Right ventricle myocardium inferior (tissue), 1 donor: ENCODE measurements at regions of chr1 and their contacts with region 1.

Region 1: DNA sequence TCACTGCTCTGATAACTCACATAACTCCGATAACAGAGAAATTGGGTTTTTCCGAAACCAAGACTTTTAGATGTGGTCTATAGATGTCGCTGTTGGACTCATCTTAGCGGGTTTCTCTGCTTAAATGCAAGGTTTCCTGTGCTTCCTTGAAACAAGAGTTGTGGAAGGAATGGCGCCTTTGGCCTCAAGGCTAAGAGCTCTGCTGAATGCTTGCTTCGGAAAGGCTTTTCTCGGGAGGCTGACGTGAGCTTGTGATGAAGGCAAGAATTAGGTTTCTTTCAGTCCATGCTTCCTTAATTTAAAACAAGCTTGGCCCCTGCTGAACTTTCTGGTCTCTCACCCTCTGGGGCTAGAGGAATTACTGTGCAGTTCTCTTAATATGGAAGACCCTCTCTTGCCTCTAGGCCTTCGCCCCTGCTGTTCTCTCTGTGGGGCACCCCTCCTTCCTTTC is 113.5 kb downstream of the MAP3K21 start:
- DNase-seq: no peak
- ATAC-seq: no peak

Region 2: GRCh38 chr1:233790662-233791375 is 349.8 kb after region 1 on chr1:
- intact Hi-C with region 1: loop called (anchors 1 kb)
- DNase-seq: no peak
- ATAC-seq: peak; percentile 79

Region 3: GRCh38 chr1:233904633-233905415 is 463.8 kb after region 1 on chr1 and contains the start of gene SLC35F3:
- intact Hi-C with region 1: loop called (anchors 5 kb)
- DNase-seq: peak; percentile 67
- ATAC-seq: peak; percentile 52
- total RNA-seq, gene SLC35F3: not detected

Region 4: GRCh38 chr1:234065794-234066447 is 624.9 kb after region 1 on chr1:
- intact Hi-C with region 1: loop called (anchors 2 kb)
- DNase-seq: peak; percentile 87
- ATAC-seq: no peak